MCF 10A (cell line): ENCODE measurements at regions of chr12 and their contacts with region 1.

Region 1: GRCh38 chr12:25958428-25959070 is at the start of gene RASSF8:
- DNase-seq: peak; percentile 72
- H3K4me3 Mint-ChIP-seq: peak within 1 kb of the TSS; percentile 81
- H3K27ac Mint-ChIP-seq: peak within 1 kb of the TSS; percentile 71
- H3K4me1 Mint-ChIP-seq: peaks cover 27% of the 10 kb centered on the region
- H3K27me3 Mint-ChIP-seq: no peaks in the 10 kb centered on the region
- CTCF ChIP-seq: no peak
- total RNA-seq, gene RASSF8: 52.9 and 70.1 TPM in 2 replicates

Region 2: DNA sequence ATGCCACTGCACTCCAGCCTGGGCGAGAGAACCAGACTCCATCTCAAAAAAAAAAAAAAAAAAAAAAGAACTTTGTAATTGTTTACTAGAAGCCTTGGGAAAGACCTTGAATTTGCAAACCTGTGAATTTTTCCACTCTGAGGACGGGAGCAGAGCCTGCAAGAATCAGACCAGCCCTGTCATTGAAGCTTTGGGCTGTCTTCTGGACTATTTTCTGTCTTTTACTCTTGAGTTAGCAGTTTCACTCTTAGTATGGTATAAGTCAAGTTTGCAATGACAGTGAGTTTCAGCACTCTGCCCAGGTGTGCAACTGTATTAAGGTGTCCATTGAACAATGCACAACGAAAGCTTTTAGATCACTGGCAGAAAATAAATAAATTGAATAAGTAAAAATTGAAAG is 626.4 kb before region 1 on chr12:
- CTCF ChIA-PET with region 1: no interaction called
- POLR2A ChIA-PET with region 1: no interaction called
- intact Hi-C with region 1: loop called (anchors 5 kb)
- DNase-seq: no peak
- H3K4me3 Mint-ChIP-seq: no peak overlapping the region
- H3K27ac Mint-ChIP-seq: no peak overlapping the region
- H3K4me1 Mint-ChIP-seq: no peaks in the 10 kb centered on the region
- H3K27me3 Mint-ChIP-seq: peaks cover 14% of the 10 kb centered on the region
- CTCF ChIP-seq: no peak

Region 3: GRCh38 chr12:25458047-25458552 is 500.4 kb before region 1 on chr12:
- CTCF ChIA-PET with region 1: interaction called, 4 read pairs
- POLR2A ChIA-PET with region 1: interaction called, 12 read pairs
- intact Hi-C with region 1: loop called (anchors 1 kb)
- DNase-seq: peak; percentile 96
- H3K4me3 Mint-ChIP-seq: peak overlapping the region; percentile 67
- H3K27ac Mint-ChIP-seq: peak overlapping the region; percentile 51
- H3K4me1 Mint-ChIP-seq: peaks cover 12% of the 10 kb centered on the region
- H3K27me3 Mint-ChIP-seq: no peaks in the 10 kb centered on the region
- CTCF ChIP-seq: no peak

Region 4: GRCh38 chr12:25533150-25533549 is 425.4 kb before region 1 on chr12:
- CTCF ChIA-PET with region 1: no interaction called
- POLR2A ChIA-PET with region 1: no interaction called
- intact Hi-C with region 1: no loop called
- DNase-seq: no peak
- H3K4me3 Mint-ChIP-seq: no peak overlapping the region
- H3K27ac Mint-ChIP-seq: no peak overlapping the region
- H3K4me1 Mint-ChIP-seq: no peaks in the 10 kb centered on the region
- H3K27me3 Mint-ChIP-seq: no peaks in the 10 kb centered on the region
- CTCF ChIP-seq: no peak

Region 5: GRCh38 chr12:25769076-25769945 is 189.2 kb before region 1 on chr12:
- CTCF ChIA-PET with region 1: interaction called, 3 read pairs
- POLR2A ChIA-PET with region 1: interaction called, 10 read pairs
- intact Hi-C with region 1: no loop called
- DNase-seq: peak; percentile 56
- H3K4me3 Mint-ChIP-seq: no peak overlapping the region
- H3K27ac Mint-ChIP-seq: no peak overlapping the region
- H3K4me1 Mint-ChIP-seq: peaks cover 24% of the 10 kb centered on the region
- H3K27me3 Mint-ChIP-seq: no peaks in the 10 kb centered on the region
- CTCF ChIP-seq: no peak

Region 6: GRCh38 chr12:25970916-25971653 is 12.5 kb after region 1 on chr12:
- CTCF ChIA-PET with region 1: interaction called, 6 read pairs
- POLR2A ChIA-PET with region 1: interaction called, 16 read pairs
- intact Hi-C with region 1: no loop called
- DNase-seq: no peak
- H3K4me3 Mint-ChIP-seq: no peak overlapping the region
- H3K27ac Mint-ChIP-seq: peak overlapping the region; percentile 42
- H3K4me1 Mint-ChIP-seq: peaks cover 61% of the 10 kb centered on the region
- H3K27me3 Mint-ChIP-seq: no peaks in the 10 kb centered on the region
- CTCF ChIP-seq: no peak

Region 7: DNA sequence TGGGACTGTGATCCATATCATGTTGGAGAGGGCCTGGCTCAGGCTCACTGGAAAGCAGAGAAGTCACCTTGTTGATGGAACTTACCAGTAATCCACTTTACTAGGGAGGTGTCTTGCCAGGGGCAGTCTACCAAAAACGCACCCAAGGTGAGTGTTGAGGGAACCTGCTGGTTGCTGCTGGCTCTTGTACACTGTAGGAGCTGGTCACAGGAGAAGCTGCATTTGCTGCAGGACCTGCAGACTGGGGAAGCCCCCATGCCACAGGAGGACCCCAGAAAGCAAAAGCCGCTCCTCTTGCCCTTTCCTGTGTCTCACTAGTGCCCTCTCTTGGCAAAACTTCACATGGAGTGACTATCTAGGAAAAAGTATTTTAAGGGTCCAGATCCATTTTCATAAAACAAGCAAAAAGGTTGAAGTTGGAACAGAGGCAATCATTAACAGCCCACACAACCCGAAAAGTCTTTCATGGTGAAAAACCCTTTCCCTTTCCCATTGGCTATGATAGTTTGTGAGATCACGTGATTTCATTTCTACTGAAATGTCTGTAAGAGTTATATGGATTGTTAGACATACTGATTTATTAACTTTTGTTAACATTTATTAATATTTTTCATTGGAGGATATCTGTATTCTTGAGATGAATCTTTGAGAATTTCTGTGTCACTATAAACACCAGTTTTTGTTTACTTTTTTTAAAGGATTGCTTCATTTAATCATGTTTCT is 59.1 kb after region 1 on chr12:
- CTCF ChIA-PET with region 1: interaction called, 11 read pairs
- POLR2A ChIA-PET with region 1: interaction called, 21 read pairs
- intact Hi-C with region 1: loop called (anchors 2 kb)
- DNase-seq: peak; percentile 63
- H3K4me3 Mint-ChIP-seq: no peak overlapping the region
- H3K27ac Mint-ChIP-seq: no peak overlapping the region
- H3K4me1 Mint-ChIP-seq: peaks cover 17% of the 10 kb centered on the region
- H3K27me3 Mint-ChIP-seq: no peaks in the 10 kb centered on the region
- CTCF ChIP-seq: peak; percentile 73

Region 8: GRCh38 chr12:26130728-26131127 is 172.2 kb after region 1 on chr12:
- CTCF ChIA-PET with region 1: no interaction called
- POLR2A ChIA-PET with region 1: no interaction called
- intact Hi-C with region 1: no loop called
- DNase-seq: no peak
- H3K4me3 Mint-ChIP-seq: no peak overlapping the region
- H3K27ac Mint-ChIP-seq: no peak overlapping the region
- H3K4me1 Mint-ChIP-seq: peaks cover 29% of the 10 kb centered on the region
- H3K27me3 Mint-ChIP-seq: no peaks in the 10 kb centered on the region
- CTCF ChIP-seq: no peak

Region 9: GRCh38 chr12:26680727-26681455 is 722.3 kb after region 1 on chr12:
- CTCF ChIA-PET with region 1: no interaction called
- POLR2A ChIA-PET with region 1: no interaction called
- intact Hi-C with region 1: no loop called
- DNase-seq: peak; percentile 26
- H3K4me3 Mint-ChIP-seq: no peak overlapping the region
- H3K27ac Mint-ChIP-seq: peak overlapping the region; percentile 18
- H3K4me1 Mint-ChIP-seq: peaks cover 22% of the 10 kb centered on the region
- H3K27me3 Mint-ChIP-seq: no peaks in the 10 kb centered on the region
- CTCF ChIP-seq: no peak